RWPE1 (cell line): ENCODE measurements at regions of chr1 and their contacts with region 1.

Region 1: DNA sequence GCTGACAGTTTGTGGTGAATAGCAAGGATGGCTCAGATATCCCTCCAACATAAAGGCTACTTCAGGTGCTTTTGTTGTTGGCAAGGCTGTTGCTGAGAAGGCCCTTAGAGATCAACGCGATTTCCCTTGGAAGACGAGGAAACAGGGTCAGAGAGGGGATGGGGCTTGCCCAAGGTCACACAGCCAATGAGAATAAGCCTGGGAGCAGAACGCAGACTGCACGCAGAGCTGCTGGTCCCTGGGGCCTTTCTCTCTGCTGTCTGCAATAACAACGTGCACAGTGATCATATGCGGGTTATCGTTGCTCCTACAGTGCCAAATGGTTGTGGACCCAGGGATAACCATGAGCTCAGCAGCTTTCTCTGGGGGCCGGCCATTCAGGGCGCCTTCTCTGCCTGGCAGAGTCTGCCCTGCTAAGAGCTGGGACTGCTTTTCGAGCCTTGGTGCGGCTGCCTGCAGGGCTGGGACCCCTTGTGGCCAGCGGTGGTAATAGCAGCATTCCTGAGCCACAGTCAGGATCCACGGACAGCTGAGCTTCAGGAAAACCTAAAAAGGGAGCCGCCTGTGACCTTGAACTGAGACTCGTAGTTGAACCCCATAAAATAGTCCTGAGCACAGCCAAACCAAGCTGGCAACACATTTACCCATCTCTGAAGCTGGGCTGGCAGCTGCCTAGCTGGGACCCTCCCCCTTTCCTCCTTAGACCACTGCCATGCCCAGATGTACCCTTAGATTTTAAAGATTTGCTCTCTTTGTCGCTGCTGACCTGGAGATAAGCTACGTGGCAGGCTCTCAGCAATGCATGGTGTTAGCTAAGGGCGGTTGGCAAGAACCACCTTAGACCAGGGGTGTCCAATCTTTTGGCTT is 39.8 kb downstream of the HTR6 start:
- DNase-seq: peak; percentile 81
- H3K27ac ChIP-seq: no peak overlapping the region
- CTCF ChIP-seq: peak; percentile 92

Region 2: GRCh38 chr1:19203440-19203839 is 501.0 kb before region 1 on chr1:
- CTCF ChIA-PET with region 1: no interaction called
- POLR2A ChIA-PET with region 1: no interaction called
- DNase-seq: peak; percentile 60
- H3K27ac ChIP-seq: peak overlapping the region; percentile 59
- CTCF ChIP-seq: no peak

Region 3: DNA sequence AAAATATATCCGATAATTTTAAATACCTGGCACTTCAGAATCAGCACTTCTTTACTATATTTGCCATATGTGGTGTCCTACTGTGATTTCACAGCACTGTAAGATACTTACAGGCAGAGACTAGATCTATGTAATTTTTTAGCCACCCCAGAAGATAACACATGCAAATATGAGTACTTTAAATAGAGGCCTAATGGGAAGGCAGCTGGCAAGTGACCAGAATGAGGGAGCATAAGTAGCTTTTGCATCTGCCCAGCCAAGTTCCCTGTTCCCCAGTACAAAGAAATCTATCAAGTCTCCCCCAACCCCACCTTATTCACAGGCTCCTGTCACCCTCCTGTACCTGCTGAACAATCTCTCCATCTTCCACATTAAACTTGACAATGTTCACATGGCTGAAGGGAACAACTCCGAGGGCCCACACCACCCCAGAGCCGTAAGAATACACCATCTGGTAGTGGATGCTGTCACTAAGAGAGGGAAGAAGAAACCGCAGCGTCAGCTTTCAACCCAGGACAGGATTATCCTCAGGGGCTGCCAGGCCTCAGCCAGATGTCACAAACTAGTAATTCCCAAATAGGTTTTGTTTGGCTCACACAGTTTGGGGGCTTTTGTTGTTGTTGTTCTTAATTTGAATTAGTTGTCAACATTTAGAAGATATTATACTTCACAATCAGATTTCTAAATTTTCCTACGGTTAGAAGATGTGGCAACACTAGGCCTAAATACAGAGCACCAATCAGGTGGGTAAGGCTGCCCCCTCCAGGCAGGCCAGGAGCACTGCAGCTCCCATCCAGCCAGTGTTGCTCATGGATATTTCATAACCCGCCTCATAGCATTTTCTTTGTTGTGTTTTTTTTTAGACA is 463.6 kb before region 1 on chr1:
- CTCF ChIA-PET with region 1: no interaction called
- POLR2A ChIA-PET with region 1: no interaction called
- DNase-seq: peak; percentile 75
- H3K27ac ChIP-seq: no peak overlapping the region
- CTCF ChIP-seq: peak; percentile 88

Region 4: DNA sequence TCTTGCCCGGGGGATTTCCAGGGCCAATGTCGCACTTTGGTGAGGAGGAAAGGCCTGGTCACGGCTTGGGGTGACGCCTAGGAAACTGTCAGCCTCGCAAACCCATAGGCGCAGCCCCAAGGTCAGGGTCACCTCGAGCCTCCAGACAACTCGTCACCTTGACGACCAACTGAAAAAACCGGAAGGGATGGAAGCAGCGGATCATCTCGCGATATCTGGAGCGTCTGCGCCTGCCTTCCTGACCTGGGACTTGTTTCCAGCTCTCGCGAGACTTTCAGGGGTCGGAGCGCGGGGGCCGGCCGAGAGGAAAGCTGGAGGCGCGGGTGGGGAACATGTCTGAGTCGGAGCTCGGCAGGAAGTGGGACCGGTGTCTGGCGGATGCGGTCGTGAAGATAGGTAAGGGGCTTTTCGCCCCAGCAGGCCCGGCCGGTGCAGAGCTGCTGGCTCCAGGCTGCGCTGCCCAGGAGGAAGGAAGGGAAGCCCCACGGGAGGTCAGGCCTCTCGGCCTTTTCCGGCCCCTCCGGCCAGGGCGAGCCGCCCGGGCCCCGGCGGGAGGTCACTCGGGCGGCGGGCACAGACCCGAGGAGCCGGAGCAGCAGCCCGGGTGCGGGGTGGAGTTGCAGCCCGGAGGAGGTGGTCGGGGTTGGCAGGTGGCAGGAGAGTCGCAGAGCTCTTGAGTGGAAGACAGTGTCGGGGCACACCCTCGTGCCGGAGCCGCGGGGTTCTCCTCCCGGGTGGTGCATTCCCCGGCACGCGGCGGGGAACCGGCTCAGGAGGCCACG is 107.6 kb before region 1 on chr1:
- CTCF ChIA-PET with region 1: no interaction called
- POLR2A ChIA-PET with region 1: no interaction called
- DNase-seq: peak; percentile 98
- H3K27ac ChIP-seq: peak overlapping the region; percentile 88
- CTCF ChIP-seq: no peak

Region 5: GRCh38 chr1:19661721-19662228 is 42.7 kb before region 1 on chr1:
- CTCF ChIA-PET with region 1: interaction called, 15 read pairs
- POLR2A ChIA-PET with region 1: no interaction called
- DNase-seq: no peak
- H3K27ac ChIP-seq: no peak overlapping the region
- CTCF ChIP-seq: peak; percentile 71

Region 6: GRCh38 chr1:19676438-19676922 is 28.0 kb before region 1 on chr1:
- CTCF ChIA-PET with region 1: interaction called, 3 read pairs
- POLR2A ChIA-PET with region 1: interaction called, 11 read pairs
- DNase-seq: peak; percentile 70
- H3K27ac ChIP-seq: no peak overlapping the region
- CTCF ChIP-seq: no peak

Region 7: DNA sequence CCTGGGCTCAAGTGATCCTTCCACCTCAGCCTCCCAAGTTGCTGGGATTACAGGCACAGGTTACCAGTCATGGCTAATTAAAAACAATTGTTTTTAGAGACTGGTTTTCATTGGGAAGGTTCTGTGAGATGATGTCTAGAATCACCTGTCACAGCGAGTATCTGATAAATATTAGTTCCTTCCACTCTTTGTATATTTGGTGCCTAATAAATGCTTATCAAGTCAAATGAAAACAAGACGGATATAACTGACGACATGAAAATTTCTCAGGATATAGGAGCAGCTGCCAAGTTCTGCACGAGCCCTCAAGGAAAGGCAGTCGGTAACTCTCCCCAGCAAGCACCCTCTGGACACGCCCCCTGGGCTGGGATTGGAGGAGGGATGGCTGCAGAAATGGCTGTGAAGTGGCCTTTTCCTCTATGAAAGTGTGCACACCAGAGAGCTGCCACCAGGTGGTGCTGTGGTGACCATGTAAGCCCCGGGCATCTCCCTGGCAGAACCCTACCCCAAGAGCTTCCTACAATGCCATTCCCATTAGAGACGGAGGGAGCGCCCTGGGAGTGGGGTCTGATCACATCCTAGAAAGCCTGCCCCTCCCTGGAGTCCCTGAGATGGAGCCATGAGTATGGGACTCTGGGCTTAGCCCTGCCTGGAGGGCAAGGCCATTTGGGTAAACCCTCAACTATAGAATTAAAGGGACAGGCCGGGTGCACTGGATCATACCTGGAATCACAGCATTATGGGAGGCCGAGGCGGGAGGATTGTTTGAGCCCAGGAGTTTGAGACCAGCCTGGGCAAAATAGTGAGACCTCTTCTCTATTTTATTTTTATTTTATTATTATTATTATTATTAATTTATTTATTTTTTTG is 11.1 kb after region 1 on chr1:
- CTCF ChIA-PET with region 1: interaction called, 12 read pairs
- POLR2A ChIA-PET with region 1: no interaction called
- DNase-seq: peak; percentile 91
- H3K27ac ChIP-seq: no peak overlapping the region
- CTCF ChIP-seq: peak; percentile 76